ENCODE measurements at regions of chr6 and their contacts with region 1.

Region 1: DNA sequence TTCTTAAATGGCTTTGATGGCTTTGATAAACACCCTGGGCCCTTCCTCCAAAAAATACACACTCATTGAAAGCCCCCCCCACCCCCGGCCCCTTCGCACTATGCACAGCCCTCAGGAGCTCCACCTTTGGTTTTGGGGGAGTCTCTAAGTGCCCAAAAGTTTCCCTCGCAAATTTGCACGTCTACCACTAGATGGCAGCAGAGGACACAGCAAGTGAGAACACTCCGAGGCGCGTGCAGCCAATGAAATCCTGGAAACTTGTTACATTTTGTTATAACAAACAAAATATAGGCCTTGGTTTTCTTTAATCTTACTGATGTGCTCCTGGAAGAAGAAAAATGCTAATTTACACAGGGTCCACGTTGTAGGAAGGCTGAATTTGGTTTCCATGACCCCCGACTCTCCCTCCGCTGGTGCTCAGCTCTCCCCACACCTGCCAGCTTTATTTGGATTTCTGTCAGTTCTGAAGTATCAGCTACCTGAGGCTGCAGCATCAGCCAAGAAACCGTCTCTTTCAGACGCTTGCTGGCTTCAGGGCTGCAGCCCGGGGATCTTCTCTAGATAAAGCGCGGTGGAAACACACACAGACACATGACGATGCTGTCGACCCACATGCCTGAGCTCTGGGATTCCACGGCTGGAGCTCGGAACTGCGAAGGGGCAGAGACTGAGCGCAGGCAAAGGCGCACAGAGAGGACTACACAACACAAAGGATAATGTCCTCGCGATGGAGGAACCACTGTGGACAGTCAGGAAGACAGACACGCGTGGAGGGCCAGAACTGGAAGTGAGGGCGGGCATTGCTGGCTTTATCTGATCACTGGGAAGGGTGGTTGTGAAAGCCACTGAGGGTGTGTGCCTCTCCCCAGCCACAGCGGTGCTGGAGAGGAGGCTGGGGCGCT is 148.4 kb upstream of the RPS6KA2 start:
- DNase-seq: peak; percentile 54
- ATAC-seq: peak; percentile 65
- H3K4me3 Mint-ChIP-seq: no peak overlapping the region
- H3K27ac Mint-ChIP-seq: peak overlapping the region; percentile 42; the same call in 1 of the 2 replicates
- H3K4me1 Mint-ChIP-seq: peaks cover 25% of the 10 kb centered on the region
- H3K27me3 Mint-ChIP-seq: peaks cover 3% of the 10 kb centered on the region; the same call in 1 of the 2 replicates
- CTCF ChIP-seq: peak; percentile 64; the same call in 1 of the 2 replicates

Region 2: DNA sequence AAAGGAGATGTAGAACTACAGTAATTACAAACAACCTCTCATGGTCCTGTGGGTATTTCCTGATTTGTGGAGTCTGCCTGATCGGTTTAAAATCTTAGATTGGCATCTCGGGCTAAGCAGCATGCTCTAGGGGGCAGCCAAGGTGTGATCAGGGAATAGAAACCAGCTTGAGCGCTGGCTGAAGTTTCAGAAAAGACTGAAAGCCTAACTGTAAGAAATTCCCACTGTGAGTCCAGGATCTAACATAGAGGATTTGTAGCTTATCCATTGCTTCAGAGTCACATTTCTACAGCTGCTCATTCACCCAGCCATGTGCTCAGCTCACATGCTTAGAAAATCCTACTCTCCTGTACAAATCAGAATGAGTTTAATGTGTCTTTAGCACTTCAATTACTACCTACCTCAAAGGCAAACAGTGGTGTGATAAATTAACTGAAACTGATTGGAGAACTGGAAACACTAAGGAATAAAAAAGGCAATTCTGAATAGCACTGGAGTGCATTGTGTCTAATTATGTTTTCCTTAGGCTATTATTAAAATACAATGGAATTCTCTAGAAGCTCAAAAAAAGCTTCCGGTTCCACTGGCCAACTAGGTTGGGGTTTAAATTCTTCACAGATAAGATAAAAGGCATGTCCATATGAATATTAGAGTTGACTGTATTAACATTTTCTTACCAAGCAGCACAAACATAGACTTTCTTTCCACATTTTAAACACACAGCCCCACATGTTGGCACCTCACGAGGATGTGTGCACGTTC is 318.9 kb before region 1 on chr6:
- CTCF ChIA-PET with region 1: interaction called, 11 read pairs
- POLR2A ChIA-PET with region 1: no interaction called
- DNase-seq: no peak
- ATAC-seq: peak; percentile 78
- H3K4me3 Mint-ChIP-seq: no peak overlapping the region
- H3K27ac Mint-ChIP-seq: 0 out of 2 replicates have a peak overlapping the region, but pooled peaks have one; percentile 61
- H3K4me1 Mint-ChIP-seq: peaks cover 4% of the 10 kb centered on the region; the same call in 1 of the 2 replicates
- H3K27me3 Mint-ChIP-seq: no peaks in the 10 kb centered on the region
- CTCF ChIP-seq: no peak

Region 3: DNA sequence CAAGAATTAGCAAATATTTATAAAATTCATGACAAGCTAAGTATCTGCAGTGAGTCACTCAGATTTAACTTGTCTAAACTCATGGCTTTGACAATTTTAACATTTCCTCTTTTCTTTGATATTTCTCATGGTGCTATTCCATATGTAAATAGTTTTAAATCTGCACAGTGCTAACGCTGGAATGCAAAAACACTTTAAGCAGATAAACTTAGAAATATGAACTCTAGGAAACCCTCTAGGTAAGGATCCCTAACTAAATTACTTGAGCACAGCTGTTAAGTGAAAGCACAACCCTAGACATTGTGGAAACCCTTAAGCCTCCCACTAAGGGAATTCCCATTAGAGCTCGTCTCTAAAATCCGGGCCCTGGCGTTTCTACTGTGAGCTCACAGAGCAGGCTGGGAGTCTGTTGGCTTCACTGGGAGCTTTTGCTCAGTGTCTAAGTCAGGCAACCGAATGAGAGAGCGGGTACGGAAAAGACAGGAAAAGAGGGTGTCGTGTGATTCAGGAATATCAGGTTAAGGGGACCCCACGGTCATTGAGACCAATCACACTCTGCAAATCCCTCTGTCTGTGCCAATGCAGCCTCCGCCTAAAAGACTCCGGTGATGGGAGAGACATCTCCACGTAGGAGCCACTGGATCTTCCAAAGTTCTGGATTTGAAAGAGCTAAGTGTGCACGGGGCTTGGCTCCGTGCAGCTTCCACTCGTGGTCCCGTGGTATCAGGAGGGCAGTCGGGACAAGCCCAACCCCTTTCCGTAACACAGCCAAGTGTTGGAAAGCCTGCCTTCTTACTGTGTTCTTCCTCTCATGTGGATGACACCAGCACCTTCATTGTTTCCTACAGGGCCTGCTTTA is 36.1 kb before region 1 on chr6:
- CTCF ChIA-PET with region 1: interaction called, 10 read pairs
- POLR2A ChIA-PET with region 1: no interaction called
- DNase-seq: no peak
- ATAC-seq: no peak
- H3K4me3 Mint-ChIP-seq: no peak overlapping the region
- H3K27ac Mint-ChIP-seq: no peak overlapping the region
- H3K4me1 Mint-ChIP-seq: peaks cover 19% of the 10 kb centered on the region
- H3K27me3 Mint-ChIP-seq: no peaks in the 10 kb centered on the region
- CTCF ChIP-seq: no peak

Region 4: GRCh38 chr6:166786704-166787293 is 11.4 kb after region 1 on chr6:
- CTCF ChIA-PET with region 1: interaction called, 20 read pairs
- POLR2A ChIA-PET with region 1: no interaction called
- DNase-seq: no peak
- ATAC-seq: peak; percentile 34; the same call in 1 of the 2 replicates
- H3K4me3 Mint-ChIP-seq: no peak overlapping the region
- H3K27ac Mint-ChIP-seq: no peak overlapping the region
- H3K4me1 Mint-ChIP-seq: no peaks in the 10 kb centered on the region
- H3K27me3 Mint-ChIP-seq: no peaks in the 10 kb centered on the region
- CTCF ChIP-seq: peak; percentile 68

Region 5: GRCh38 chr6:166904101-166904746 is 128.8 kb after region 1 on chr6:
- CTCF ChIA-PET with region 1: interaction called, 10 read pairs
- POLR2A ChIA-PET with region 1: no interaction called
- DNase-seq: no peak
- ATAC-seq: peak; percentile 47
- H3K4me3 Mint-ChIP-seq: no peak overlapping the region
- H3K27ac Mint-ChIP-seq: no peak overlapping the region
- H3K4me1 Mint-ChIP-seq: peaks cover 10% of the 10 kb centered on the region
- H3K27me3 Mint-ChIP-seq: no peaks in the 10 kb centered on the region
- CTCF ChIP-seq: no peak

Region 6: DNA sequence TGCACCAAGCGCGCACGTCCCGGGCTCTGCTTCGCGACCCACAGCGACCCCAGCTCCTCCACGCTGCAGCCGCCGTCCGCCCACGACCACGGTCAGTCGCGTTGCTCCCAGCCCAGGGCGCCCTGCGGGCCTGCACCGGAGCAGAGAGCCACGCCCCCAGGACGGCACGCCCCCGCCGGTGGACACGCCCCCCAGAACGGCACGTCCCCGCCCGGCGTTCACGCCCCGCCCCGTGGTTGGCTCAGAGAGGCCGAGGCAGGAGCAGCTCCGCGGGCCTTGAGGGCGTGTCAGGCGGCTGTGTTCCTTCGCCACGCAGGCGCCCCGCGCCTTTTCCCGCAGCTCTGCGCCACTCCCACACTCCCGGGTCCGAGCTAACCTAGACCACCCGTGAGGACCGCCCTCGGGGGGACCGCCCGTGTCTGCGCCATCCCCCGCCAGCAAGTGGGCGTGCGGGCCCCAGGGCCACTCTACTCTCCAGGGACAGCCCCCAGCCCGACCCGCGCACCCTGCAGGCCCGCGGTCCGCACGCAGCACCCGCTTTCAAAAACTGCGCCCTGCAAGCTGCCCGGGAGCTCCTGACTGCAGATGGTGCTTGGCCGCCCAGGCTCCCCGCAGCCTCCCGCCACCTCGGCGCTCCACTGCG is 181.1 kb after region 1 on chr6 and contains the start of gene RNASET2:
- CTCF ChIA-PET with region 1: interaction called, 44 read pairs
- POLR2A ChIA-PET with region 1: interaction called, 3 read pairs
- DNase-seq: peak; percentile 98
- ATAC-seq: peak; percentile 88
- H3K4me3 Mint-ChIP-seq: peak within 1 kb of the TSS; percentile 78
- H3K27ac Mint-ChIP-seq: peak within 1 kb of the TSS; percentile 72; the same call in 1 of the 2 replicates
- H3K4me1 Mint-ChIP-seq: peaks cover 33% of the 10 kb centered on the region
- H3K27me3 Mint-ChIP-seq: peaks cover 12% of the 10 kb centered on the region
- CTCF ChIP-seq: no peak
- total RNA-seq, gene RNASET2: 35.6 to 44.3 TPM (median 41.9 TPM) in 3 replicates

Region 7: GRCh38 chr6:167047554-167047953 is 272.1 kb after region 1 on chr6:
- CTCF ChIA-PET with region 1: interaction called, 16 read pairs
- POLR2A ChIA-PET with region 1: no interaction called
- DNase-seq: no peak
- ATAC-seq: no peak
- H3K4me3 Mint-ChIP-seq: no peak overlapping the region
- H3K27ac Mint-ChIP-seq: no peak overlapping the region
- H3K4me1 Mint-ChIP-seq: peaks cover 3% of the 10 kb centered on the region
- H3K27me3 Mint-ChIP-seq: no peaks in the 10 kb centered on the region
- CTCF ChIP-seq: no peak

Measured in WTC11 (cell line).